CD4-positive, alpha-beta memory T cell (primary cell): ENCODE measurements at regions of chr4 and their contacts with region 1.

Region 1: DNA sequence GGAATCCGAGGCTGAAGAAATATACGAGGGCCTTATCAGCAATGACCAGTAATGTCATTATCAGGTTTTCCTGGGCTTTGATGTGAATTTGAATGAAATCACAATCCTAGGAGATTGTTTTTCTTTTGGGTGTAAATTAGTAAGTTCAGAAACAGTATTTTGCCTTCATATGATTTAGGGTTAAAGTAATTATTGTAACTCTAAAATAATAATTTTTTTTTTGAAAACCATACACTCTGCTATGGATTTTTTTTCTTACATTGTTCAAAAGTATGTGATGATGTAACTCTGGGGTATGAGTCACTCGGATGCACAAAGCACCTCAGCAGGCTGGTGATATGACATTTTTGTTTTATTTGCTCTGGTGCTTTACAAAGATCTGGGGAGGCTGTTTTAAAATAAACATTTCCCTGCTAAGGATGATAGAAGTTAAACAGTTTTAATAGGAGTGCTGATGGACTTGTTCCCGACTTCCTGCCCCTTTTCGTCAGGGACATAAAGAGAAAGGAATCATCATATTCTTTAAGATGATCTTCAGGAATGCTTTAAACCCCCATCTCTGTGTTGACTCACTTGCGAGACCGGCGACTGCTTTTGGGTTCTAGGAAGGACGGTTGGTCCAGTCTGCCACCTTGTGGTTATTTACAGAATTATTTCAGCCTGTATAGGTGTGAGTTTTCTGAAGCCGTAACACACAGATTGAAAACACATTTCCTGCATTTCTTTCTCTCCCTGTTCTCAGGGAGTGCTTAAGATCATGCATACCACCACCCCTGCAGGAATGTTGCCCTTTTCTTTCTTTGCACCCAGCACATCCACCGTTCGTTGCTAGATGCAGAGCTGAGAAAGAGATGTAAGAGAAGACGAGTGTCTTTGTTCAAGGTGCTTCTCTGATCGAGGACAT is 72.5 kb downstream of the RAPGEF2 start:
- DNase-seq: peak; percentile 59 to 70 (median 68)
- H3K4me3 ChIP-seq: no peak overlapping the region
- H3K4me3 Mint-ChIP-seq: peak overlapping the region in 4 of 8 donors; percentile 3 to 40 (median 15)
- H3K27ac ChIP-seq: no peak overlapping the region
- H3K27ac Mint-ChIP-seq: peak overlapping the region in 3 of 7 donors; percentile 15 to 78 (median 74)
- H3K4me1 ChIP-seq: peaks cover 16% of the 10 kb centered on the region
- H3K4me1 Mint-ChIP-seq: peaks cover 22 to 39% (median 28%) of the 10 kb centered on the region in 4 donors
- H3K27me3 ChIP-seq: no peaks in the 10 kb centered on the region
- H3K27me3 Mint-ChIP-seq: no peaks in the 10 kb centered on the region

Region 2: GRCh38 chr4:157992038-157992705 is 1183.2 kb before region 1 on chr4:
- CTCF ChIA-PET with region 1: no interaction called
- POLR2A ChIA-PET with region 1: no interaction called
- intact Hi-C with region 1: loop called (anchors 2 kb)
- DNase-seq: peak in 4 of 5 donors; percentile 18 to 37 (median 28)
- H3K4me3 ChIP-seq: no peak overlapping the region
- H3K4me3 Mint-ChIP-seq: peak overlapping the region in 5 of 8 donors; percentile 18 to 68 (median 45)
- H3K27ac ChIP-seq: no peak overlapping the region
- H3K27ac Mint-ChIP-seq: peak overlapping the region in 1 of 7 donors; percentile 41
- H3K4me1 ChIP-seq: no peaks in the 10 kb centered on the region
- H3K4me1 Mint-ChIP-seq: peaks cover 0 to 4% (median 0%) of the 10 kb centered on the region in 4 donors
- H3K27me3 ChIP-seq: no peaks in the 10 kb centered on the region
- H3K27me3 Mint-ChIP-seq: no peaks in the 10 kb centered on the region

Region 3: GRCh38 chr4:158671915-158672806 is 503.2 kb before region 1 on chr4 and contains the start of gene ETFDH:
- CTCF ChIA-PET with region 1: no interaction called
- POLR2A ChIA-PET with region 1: no interaction called
- intact Hi-C with region 1: loop called (anchors 5 kb)
- DNase-seq: peak; percentile 97 to 99 (median 99)
- H3K4me3 ChIP-seq: peak within 1 kb of the TSS; percentile 53 to 94
- H3K4me3 Mint-ChIP-seq: peak within 1 kb of the TSS; percentile 92 to 98 (median 96)
- H3K27ac ChIP-seq: peak within 1 kb of the TSS; percentile 92
- H3K27ac Mint-ChIP-seq: peak within 1 kb of the TSS; percentile 92 to 99 (median 98)
- H3K4me1 ChIP-seq: peaks cover 22% of the 10 kb centered on the region
- H3K4me1 Mint-ChIP-seq: peaks cover 12 to 34% (median 23%) of the 10 kb centered on the region in 4 donors
- H3K27me3 ChIP-seq: no peaks in the 10 kb centered on the region
- H3K27me3 Mint-ChIP-seq: no peaks in the 10 kb centered on the region
- total RNA-seq, gene ETFDH: 16.0 to 16.6 TPM

Region 4: GRCh38 chr4:158729716-158730559 is 445.4 kb before region 1 on chr4:
- CTCF ChIA-PET with region 1: interaction called, 3 read pairs
- POLR2A ChIA-PET with region 1: no interaction called
- intact Hi-C with region 1: loop called (anchors 1 kb)
- DNase-seq: peak in 4 of 5 donors; percentile 51 to 55 (median 54)
- H3K4me3 ChIP-seq: no peak overlapping the region
- H3K4me3 Mint-ChIP-seq: no peak overlapping the region
- H3K27ac ChIP-seq: no peak overlapping the region
- H3K27ac Mint-ChIP-seq: no peak overlapping the region
- H3K4me1 ChIP-seq: no peaks in the 10 kb centered on the region
- H3K4me1 Mint-ChIP-seq: peaks cover 0 to 1% (median 0%) of the 10 kb centered on the region in 4 donors
- H3K27me3 ChIP-seq: peaks cover 5% of the 10 kb centered on the region
- H3K27me3 Mint-ChIP-seq: peaks cover 21 to 22% of the 10 kb centered on the region in 2 donors

Region 5: GRCh38 chr4:158856852-158857251 is 318.5 kb before region 1 on chr4:
- CTCF ChIA-PET with region 1: interaction called, 25 read pairs
- POLR2A ChIA-PET with region 1: no interaction called
- intact Hi-C with region 1: no loop called
- DNase-seq: peak in 4 of 5 donors; percentile 22 to 28 (median 27)
- H3K4me3 ChIP-seq: no peak overlapping the region
- H3K4me3 Mint-ChIP-seq: no peak overlapping the region
- H3K27ac ChIP-seq: no peak overlapping the region
- H3K27ac Mint-ChIP-seq: no peak overlapping the region
- H3K4me1 ChIP-seq: no peaks in the 10 kb centered on the region
- H3K4me1 Mint-ChIP-seq: no peaks in the 10 kb centered on the region
- H3K27me3 ChIP-seq: no peaks in the 10 kb centered on the region
- H3K27me3 Mint-ChIP-seq: no peaks in the 10 kb centered on the region

Region 6: DNA sequence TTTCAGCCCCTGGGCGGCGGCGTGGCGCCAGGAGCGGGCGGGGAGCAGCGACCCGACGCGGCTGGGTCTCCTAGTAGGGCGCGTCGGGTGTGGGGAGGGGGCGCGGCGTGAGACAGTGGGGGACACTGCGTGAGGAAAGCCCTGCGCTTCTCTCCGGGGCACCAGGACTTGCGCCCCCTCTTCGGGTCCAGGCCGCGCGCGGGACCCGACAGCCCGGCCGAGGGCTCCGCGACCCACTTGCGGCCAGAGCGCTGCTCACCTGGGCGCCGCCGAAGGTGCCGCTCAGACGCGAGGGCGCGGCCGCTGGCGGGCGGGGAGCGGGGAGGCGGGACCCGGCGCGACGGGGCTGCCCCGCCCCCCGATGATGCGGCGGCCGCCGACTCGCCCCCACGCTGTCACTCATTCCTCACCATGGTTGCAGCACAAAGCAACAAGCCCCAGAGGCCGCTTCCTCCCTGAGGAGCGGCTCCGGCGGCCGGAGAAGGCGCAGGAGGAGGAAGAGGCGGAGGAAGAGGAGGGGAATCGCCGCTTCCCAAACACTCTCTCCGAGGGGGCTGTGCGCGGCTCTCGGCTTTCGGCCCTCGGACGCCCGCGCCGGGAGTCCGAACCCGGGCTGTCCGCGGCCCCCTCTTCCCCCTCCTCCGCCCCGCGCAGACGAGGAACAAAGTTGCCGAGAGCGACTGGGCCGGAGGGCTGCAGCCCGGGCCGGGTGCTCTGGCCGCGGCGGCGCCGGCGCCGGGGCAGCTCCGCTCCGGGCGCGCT is 72.5 kb before region 1 on chr4 and contains the start of gene RAPGEF2:
- CTCF ChIA-PET with region 1: interaction called, 4 read pairs
- POLR2A ChIA-PET with region 1: no interaction called
- intact Hi-C with region 1: loop called (anchors 2 kb)
- DNase-seq: peak; percentile 88 to 91 (median 90)
- H3K4me3 ChIP-seq: peak within 1 kb of the TSS; percentile 32 to 66
- H3K4me3 Mint-ChIP-seq: peak within 1 kb of the TSS; percentile 86 to 92 (median 90)
- H3K27ac ChIP-seq: peak within 1 kb of the TSS; percentile 65
- H3K27ac Mint-ChIP-seq: peak within 1 kb of the TSS; percentile 89 to 97 (median 94)
- H3K4me1 ChIP-seq: peaks cover 40% of the 10 kb centered on the region
- H3K4me1 Mint-ChIP-seq: peaks cover 31 to 48% (median 40%) of the 10 kb centered on the region in 4 donors
- H3K27me3 ChIP-seq: no peaks in the 10 kb centered on the region
- H3K27me3 Mint-ChIP-seq: no peaks in the 10 kb centered on the region
- total RNA-seq, gene RAPGEF2: 23.1 to 27.9 TPM